Heart left ventricle (tissue), 16 donors: ENCODE measurements at regions of chr5 and their contacts with region 1.

Region 1: DNA sequence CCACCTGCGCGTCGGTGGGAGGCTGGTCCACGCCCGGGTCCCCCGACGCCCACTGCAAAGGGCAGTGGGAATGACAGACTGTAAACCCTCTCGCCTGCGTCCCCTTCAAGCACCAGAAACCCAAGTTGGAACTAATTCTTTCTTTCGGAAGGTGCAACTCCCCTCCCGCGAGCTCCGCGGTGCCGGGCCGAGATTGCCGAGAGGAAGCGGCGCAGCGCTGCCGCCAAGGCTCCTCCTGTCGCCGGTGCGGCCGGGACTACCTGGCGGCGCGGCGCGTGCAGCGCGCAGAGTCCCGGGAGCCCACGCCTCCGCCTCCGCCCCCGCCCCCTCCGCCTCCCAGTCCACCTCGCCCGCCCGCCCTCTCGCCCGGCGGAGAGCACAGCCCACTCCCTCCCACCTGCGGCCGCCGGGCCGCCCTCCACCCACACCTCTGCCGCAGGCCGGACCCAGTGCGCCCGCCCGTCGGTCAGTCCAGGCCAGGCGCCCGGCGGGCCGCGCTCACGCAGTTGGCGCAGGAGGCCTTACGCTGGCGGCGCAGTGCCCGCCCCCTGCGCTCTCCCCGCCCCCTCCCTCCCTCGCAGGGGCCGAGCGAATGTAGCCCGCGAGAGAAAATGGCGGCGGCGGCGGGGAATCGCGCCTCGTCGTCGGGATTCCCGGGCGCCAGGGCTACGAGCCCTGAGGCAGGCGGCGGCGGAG is at the start of gene MAP3K1:
- DNase-seq: peak; percentile 73 to 92 (median 83)
- ATAC-seq: peak; percentile 65 to 94 (median 80)
- H3K4me3 ChIP-seq: peak within 1 kb of the TSS; percentile 81 to 93 (median 88)
- H3K27ac ChIP-seq: peak within 1 kb of the TSS; percentile 87 to 98 (median 93)
- H3K4me1 ChIP-seq: peaks cover 0 to 43% (median 30%) of the 10 kb centered on the region in 12 donors
- H3K27me3 ChIP-seq: no peaks in the 10 kb centered on the region
- CTCF ChIP-seq: peak in 4 of 12 donors; percentile 17 to 36 (median 33)
- POLR2A ChIP-seq: no peak
- total RNA-seq, gene MAP3K1: 4.5 to 19.5 (median 7.2) TPM

Region 2: GRCh38 chr5:56350598-56351170 is 464.4 kb before region 1 on chr5:
- intact Hi-C with region 1: loop called in 2 of 10 experiments (anchors 10 kb)
- DNase-seq: peak; percentile 72 to 91 (median 80)
- ATAC-seq: peak; percentile 16 to 95 (median 93)
- H3K4me3 ChIP-seq: no peak overlapping the region
- H3K27ac ChIP-seq: peak overlapping the region in 10 of 12 donors; percentile 3 to 76 (median 51)
- H3K4me1 ChIP-seq: peaks cover 0 to 50% (median 22%) of the 10 kb centered on the region in 12 donors
- H3K27me3 ChIP-seq: no peaks in the 10 kb centered on the region
- CTCF ChIP-seq: no peak
- POLR2A ChIP-seq: no peak

Region 3: GRCh38 chr5:56481428-56482357 is 333.4 kb before region 1 on chr5:
- intact Hi-C with region 1: loop called in 6 of 10 experiments (anchors 2 to 10 kb)
- DNase-seq: peak; percentile 73 to 80 (median 76)
- ATAC-seq: peak; percentile 32 to 75 (median 62)
- H3K4me3 ChIP-seq: peak overlapping the region; percentile 51 to 79 (median 68)
- H3K27ac ChIP-seq: peak overlapping the region; percentile 88 to 98 (median 94)
- H3K4me1 ChIP-seq: peaks cover 4 to 45% (median 22%) of the 10 kb centered on the region in 12 donors
- H3K27me3 ChIP-seq: no peaks in the 10 kb centered on the region
- CTCF ChIP-seq: peak in 8 of 12 donors; percentile 14 to 52 (median 30)
- POLR2A ChIP-seq: no peak

Region 4: DNA sequence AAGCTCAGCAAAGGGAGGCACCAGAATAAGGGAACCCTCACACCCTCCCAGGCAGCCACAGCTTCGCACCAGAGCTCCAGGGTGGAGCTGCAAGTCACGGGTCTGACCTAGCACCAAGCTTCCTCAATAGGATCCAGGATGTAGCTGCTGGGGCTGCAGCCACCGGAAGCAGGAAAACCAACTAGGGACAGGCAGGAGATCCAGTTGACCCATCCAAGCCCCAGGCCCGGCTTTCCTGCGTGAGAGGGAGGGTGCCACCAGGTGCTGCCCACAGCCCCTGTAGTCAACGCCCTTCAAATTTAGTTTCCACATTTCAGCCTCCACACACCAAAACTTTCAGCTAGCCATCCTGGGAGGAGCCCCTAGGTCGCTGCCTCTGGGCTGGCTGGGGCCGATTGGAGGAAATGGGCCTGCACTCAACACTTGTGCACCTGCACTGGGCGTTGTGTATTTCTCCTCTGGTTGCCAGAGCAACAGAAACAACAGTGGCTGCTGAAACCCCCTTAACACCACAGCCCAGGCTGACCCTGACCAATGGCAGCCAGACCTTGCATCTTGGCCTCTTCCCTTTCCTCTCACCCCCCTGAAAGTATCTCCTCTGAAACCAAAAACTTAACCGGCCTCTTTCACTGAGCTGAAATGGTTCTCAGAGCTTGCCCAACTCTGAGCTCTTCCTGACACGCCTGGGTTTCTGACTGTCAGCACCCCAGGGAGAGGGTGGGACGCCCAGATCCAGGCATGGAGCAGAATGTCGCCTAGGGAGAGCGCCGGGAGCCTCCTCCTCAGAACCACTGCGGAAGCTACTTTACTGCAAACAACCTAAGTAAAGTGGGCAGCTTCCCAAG is 226.3 kb before region 1 on chr5:
- intact Hi-C with region 1: loop called in 2 of 10 experiments (anchors 1 to 2 kb)
- DNase-seq: peak; percentile 61 to 86 (median 72)
- ATAC-seq: peak; percentile 23 to 71 (median 64)
- H3K4me3 ChIP-seq: no peak overlapping the region
- H3K27ac ChIP-seq: peak overlapping the region; percentile 1 to 84 (median 61)
- H3K4me1 ChIP-seq: peaks cover 4 to 52% (median 39%) of the 10 kb centered on the region in 12 donors
- H3K27me3 ChIP-seq: no peaks in the 10 kb centered on the region
- CTCF ChIP-seq: no peak
- POLR2A ChIP-seq: no peak

Region 5: GRCh38 chr5:56615361-56616153 is 199.6 kb before region 1 on chr5:
- intact Hi-C with region 1: loop called in 2 of 10 experiments (anchors 2 kb)
- DNase-seq: peak in 2 of 5 donors; percentile 38 to 54
- ATAC-seq: peak; percentile 32 to 78 (median 68)
- H3K4me3 ChIP-seq: no peak overlapping the region
- H3K27ac ChIP-seq: peak overlapping the region in 11 of 12 donors; percentile 18 to 61 (median 45)
- H3K4me1 ChIP-seq: peaks cover 3 to 28% (median 19%) of the 10 kb centered on the region in 12 donors
- H3K27me3 ChIP-seq: no peaks in the 10 kb centered on the region
- CTCF ChIP-seq: no peak
- POLR2A ChIP-seq: no peak

Region 6: GRCh38 chr5:56696900-56697299 is 118.2 kb before region 1 on chr5:
- intact Hi-C with region 1: loop called in 3 of 10 experiments (anchors 5 to 10 kb)
- DNase-seq: peak in 2 of 5 donors; percentile 30
- ATAC-seq: no peak
- H3K4me3 ChIP-seq: no peak overlapping the region
- H3K27ac ChIP-seq: peak overlapping the region in 1 of 12 donors; percentile 24
- H3K4me1 ChIP-seq: peaks cover 0 to 45% (median 27%) of the 10 kb centered on the region in 12 donors
- H3K27me3 ChIP-seq: no peaks in the 10 kb centered on the region
- CTCF ChIP-seq: no peak
- POLR2A ChIP-seq: no peak

Region 7: DNA sequence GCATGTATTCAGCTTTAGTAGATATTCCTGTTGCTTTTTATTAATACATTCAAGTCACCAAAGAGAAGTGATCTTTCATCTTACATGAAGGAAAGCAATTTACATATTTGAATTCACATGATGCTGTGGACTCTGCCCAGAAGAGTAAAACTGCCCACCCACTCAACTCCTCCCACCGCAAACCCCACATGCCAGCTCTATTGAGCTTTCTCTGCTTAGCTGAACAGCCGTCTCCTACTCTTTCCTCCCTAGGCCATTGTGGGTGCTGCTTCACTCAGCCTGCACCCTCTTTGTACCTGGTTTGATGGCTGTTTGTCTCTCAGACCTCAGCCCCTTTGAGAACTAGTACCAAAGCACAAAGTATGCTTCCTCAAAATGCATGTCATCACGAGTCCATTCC is 48.2 kb before region 1 on chr5:
- intact Hi-C with region 1: loop called in 1 of 10 experiments (anchors 5 kb)
- DNase-seq: no peak
- ATAC-seq: no peak
- H3K4me3 ChIP-seq: no peak overlapping the region
- H3K27ac ChIP-seq: no peak overlapping the region
- H3K4me1 ChIP-seq: peaks cover 0 to 19% (median 4%) of the 10 kb centered on the region in 12 donors
- H3K27me3 ChIP-seq: no peaks in the 10 kb centered on the region
- CTCF ChIP-seq: no peak
- POLR2A ChIP-seq: no peak

Region 8: GRCh38 chr5:56852228-56853000 is 37.3 kb after region 1 on chr5:
- intact Hi-C with region 1: no loop called
- DNase-seq: no peak
- ATAC-seq: peak in 1 of 4 donors; percentile 14
- H3K4me3 ChIP-seq: peak overlapping the region in 1 of 12 donors; percentile 4
- H3K27ac ChIP-seq: peak overlapping the region in 1 of 12 donors; percentile 50
- H3K4me1 ChIP-seq: peaks cover 3 to 100% (median 76%) of the 10 kb centered on the region in 12 donors
- H3K27me3 ChIP-seq: no peaks in the 10 kb centered on the region
- CTCF ChIP-seq: no peak
- POLR2A ChIP-seq: no peak